ENCODE measurements at regions of chr9 and their contacts with region 1.

Region 1: DNA sequence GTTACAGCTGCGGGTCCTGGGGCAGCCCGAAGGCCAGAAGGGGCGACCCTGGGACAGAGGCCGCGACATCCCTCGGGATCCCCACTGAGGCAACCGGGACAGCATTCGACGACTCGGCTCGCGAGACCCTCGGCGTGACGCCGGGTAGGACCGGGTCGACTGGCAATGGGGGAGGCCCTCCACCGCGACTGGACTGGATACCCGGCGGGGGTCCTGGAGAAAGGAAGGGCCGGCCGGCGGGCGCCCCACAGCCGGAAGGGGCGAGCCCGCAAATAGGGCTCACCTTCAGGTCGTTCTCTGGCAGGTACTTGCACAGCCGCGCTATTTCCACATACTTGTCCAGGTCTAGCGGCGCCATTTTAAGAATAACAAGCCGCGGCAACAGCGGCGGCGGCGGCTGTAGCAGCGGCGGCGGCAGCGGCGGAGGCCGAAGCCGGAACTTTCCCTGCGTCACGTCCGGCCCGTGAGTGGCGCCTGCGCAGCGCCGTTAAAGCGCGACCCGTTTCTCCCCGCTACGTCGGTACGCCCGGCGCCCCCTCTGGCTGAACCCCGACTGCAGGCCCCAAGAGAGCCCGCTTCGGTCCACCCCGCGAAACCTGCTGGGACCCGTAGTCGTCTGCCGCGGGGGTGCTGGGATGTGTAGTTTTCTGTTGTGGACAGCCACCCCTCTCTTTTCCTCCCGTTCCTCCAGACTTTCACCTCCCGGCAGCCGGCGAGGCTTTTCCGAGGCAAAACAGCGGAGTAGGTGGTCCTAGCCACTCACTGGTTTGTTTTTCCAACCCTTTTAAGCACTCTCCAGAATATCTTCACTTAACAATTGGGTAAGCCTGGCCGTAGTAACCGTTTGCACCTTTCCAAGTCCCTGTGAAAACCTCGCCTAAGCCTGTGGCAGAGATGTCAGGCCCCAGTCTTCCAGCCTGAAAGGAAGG is at the start of gene PPP6C:
- DNase-seq: peak; percentile 98
- H3K4me3 ChIP-seq: peak within 1 kb of the TSS; percentile 82 to 99 (median 95)
- H3K27ac ChIP-seq: peak within 1 kb of the TSS; percentile 96 to 99 (median 97)
- H3K4me1 ChIP-seq: peaks cover 41 to 59% (median 55%) of the 10 kb centered on the region in 4 donors
- H3K27me3 ChIP-seq: no peaks in the 10 kb centered on the region
- CTCF ChIP-seq: peak; percentile 48 to 68 (median 65)
- EP300 ChIP-seq: no peak
- POLR2A ChIP-seq: peak; percentile 75
- total RNA-seq, gene PPP6C: 22.1 to 38.4 (median 34.9) TPM

Region 2: DNA sequence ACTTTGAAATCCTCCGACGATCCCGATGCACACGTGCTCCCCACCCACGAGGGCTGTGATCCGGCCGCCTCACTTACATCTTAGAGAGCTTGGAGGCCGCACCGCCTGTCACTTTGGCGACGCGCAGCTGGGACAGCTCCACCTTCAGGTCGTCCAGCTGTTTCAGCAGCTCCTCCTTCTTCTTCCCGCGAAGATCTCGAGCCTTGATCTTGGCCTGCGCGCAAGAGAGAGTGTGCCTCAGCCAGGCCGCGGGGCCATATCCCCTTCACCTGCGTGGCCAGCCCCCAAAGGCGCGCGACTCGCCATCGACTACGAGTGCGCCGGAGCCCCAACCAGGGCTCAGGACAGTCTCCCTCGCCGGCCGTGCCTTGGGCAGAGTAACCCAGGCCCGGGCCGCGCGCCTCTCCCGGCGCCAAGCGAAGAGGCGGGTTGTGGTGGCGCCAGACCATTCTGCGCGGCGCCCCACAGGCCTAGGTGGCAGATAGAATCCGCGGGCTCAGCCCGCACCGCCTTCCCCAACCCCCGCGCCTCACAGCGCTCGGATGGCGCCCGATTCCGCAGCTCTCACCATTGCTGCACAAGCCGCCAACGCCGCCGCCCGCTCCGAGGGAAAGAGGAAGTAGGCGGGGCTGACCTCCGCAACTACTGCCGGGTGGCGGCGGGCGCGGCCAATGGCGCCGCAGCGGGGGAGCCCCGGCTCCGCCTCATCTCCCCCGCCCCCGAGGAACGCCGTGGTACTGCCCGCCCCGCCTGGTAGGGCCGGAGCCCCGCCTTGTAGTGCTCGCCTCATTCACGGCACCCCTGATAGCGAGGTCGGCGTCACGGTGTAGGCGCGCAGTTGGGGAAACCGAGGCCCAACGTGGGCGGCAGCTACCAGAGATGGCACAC is 328.0 kb before region 1 on chr9 and contains the starts of genes ARPC5L and RPL35:
- intact Hi-C with region 1: loop called (anchors 10 kb)
- DNase-seq: peak; percentile 98
- H3K4me3 ChIP-seq: peak within 1 kb of the TSS; percentile 66 to 83 (median 72)
- H3K27ac ChIP-seq: peak within 1 kb of the TSS; percentile 84 to 89 (median 87)
- H3K4me1 ChIP-seq: peaks cover 24 to 41% (median 36%) of the 10 kb centered on the region in 4 donors
- H3K27me3 ChIP-seq: no peaks in the 10 kb centered on the region
- CTCF ChIP-seq: peak in 2 of 3 experiments; percentile 10 to 26
- EP300 ChIP-seq: no peak
- POLR2A ChIP-seq: peak; percentile 79
- total RNA-seq, gene ARPC5L: 23.3 to 28.2 (median 26.7) TPM
- total RNA-seq, gene RPL35: 1,125 to 3,077 (median 1,901) TPM

Region 3: DNA sequence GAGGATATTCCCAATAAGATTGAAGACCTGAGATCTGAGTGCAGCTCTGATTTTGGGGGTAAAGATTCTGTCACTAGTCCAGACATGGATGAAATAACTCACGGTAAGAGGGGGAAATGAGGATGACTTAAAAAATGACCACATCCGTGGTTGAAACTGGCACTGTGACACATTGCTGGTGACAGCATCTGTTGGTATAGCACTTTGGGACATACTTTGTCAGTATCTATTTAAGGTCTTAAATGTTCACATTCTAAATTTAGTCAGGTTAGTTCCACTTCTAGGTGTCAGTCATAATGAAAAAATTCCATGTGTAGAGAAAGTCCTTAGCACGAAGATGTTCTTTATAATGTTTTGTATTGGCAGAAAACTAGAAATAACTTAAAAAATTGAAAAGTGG is 142.9 kb after region 1 on chr9:
- intact Hi-C with region 1: no loop called
- DNase-seq: no peak
- H3K4me3 ChIP-seq: no peak overlapping the region
- H3K27ac ChIP-seq: no peak overlapping the region
- H3K4me1 ChIP-seq: peaks cover 0 to 5% (median 1%) of the 10 kb centered on the region in 4 donors
- H3K27me3 ChIP-seq: no peaks in the 10 kb centered on the region
- CTCF ChIP-seq: no peak
- EP300 ChIP-seq: no peak
- POLR2A ChIP-seq: no peak